CD4-positive, alpha-beta memory T cell (primary cell): ENCODE measurements at regions of chr5 and their contacts with region 1.

Region 1: GRCh38 chr5:149567226-149567625 is 14.1 kb upstream of the ARHGEF37 start:
- DNase-seq: no peak
- H3K4me3 ChIP-seq: no peak overlapping the region
- H3K4me3 Mint-ChIP-seq: no peak overlapping the region
- H3K27ac ChIP-seq: no peak overlapping the region
- H3K27ac Mint-ChIP-seq: no peak overlapping the region
- H3K4me1 ChIP-seq: no peaks in the 10 kb centered on the region
- H3K4me1 Mint-ChIP-seq: peaks cover 0 to 9% (median 6%) of the 10 kb centered on the region in 4 donors
- H3K27me3 ChIP-seq: no peaks in the 10 kb centered on the region
- H3K27me3 Mint-ChIP-seq: no peaks in the 10 kb centered on the region

Region 2: GRCh38 chr5:149381987-149382340 is 185.3 kb before region 1 on chr5:
- CTCF ChIA-PET with region 1: interaction called, 84 read pairs
- POLR2A ChIA-PET with region 1: interaction called, 3 read pairs
- intact Hi-C with region 1: loop called (anchors 1 kb)
- DNase-seq: peak; percentile 50 to 56 (median 54)
- H3K4me3 ChIP-seq: no peak overlapping the region
- H3K4me3 Mint-ChIP-seq: no peak overlapping the region
- H3K27ac ChIP-seq: no peak overlapping the region
- H3K27ac Mint-ChIP-seq: peak overlapping the region in 3 of 7 donors; percentile 43 to 58 (median 53)
- H3K4me1 ChIP-seq: no peaks in the 10 kb centered on the region
- H3K4me1 Mint-ChIP-seq: peaks cover 0 to 4% (median 1%) of the 10 kb centered on the region in 4 donors
- H3K27me3 ChIP-seq: no peaks in the 10 kb centered on the region
- H3K27me3 Mint-ChIP-seq: peaks cover 3 to 4% of the 10 kb centered on the region in 2 donors

Region 3: DNA sequence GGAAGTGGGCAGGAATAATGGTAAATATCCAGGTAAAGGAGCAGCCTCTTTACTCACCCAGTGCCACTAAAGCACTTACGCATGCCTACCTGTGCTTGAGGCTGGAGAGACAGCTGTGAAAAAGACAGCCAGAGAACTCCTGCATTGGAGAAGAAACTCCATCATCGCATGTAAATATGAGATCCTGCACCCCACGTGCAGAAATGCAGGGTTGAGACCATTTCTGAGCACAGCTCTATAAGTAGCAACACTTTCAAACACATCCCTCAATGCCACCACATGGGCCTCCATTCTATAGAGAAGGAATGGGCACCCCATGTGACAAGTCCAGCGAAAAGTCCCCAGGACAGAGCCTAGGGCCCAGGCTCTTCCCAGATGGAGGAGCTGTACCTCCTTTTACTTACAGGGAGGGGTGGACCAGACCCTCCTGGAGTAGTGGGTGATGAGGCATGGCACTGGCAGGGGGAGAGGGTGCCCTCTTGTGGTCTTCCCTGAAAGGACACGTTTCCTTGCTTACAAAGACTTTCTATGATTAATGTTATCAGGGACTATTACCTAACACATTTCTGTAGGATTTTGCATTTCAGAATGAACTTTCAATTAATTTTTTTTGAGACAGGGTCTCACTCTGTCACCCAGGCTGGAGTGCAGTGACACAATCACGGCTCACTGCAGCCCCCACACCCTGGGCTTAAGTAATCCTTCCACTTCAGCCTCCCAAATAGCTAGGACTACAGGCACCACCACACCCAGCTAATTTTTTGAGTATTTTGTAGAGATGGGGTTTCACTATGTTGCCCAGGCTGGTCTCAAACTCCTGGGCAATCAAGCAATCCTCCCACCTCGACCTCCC is 132.8 kb before region 1 on chr5:
- CTCF ChIA-PET with region 1: interaction called, 68 read pairs
- POLR2A ChIA-PET with region 1: no interaction called
- intact Hi-C with region 1: loop called (anchors 2 kb)
- DNase-seq: peak in 4 of 5 donors; percentile 34 to 42 (median 38)
- H3K4me3 ChIP-seq: no peak overlapping the region
- H3K4me3 Mint-ChIP-seq: no peak overlapping the region
- H3K27ac ChIP-seq: no peak overlapping the region
- H3K27ac Mint-ChIP-seq: no peak overlapping the region
- H3K4me1 ChIP-seq: peaks cover 3% of the 10 kb centered on the region
- H3K4me1 Mint-ChIP-seq: peaks cover 0 to 11% (median 6%) of the 10 kb centered on the region in 4 donors
- H3K27me3 ChIP-seq: no peaks in the 10 kb centered on the region
- H3K27me3 Mint-ChIP-seq: no peaks in the 10 kb centered on the region

Region 4: GRCh38 chr5:149442563-149443182 is 124.6 kb before region 1 on chr5:
- CTCF ChIA-PET with region 1: interaction called, 68 read pairs
- POLR2A ChIA-PET with region 1: no interaction called
- intact Hi-C with region 1: loop called (anchors 1 kb)
- DNase-seq: peak; percentile 45 to 53 (median 48)
- H3K4me3 ChIP-seq: no peak overlapping the region
- H3K4me3 Mint-ChIP-seq: no peak overlapping the region
- H3K27ac ChIP-seq: no peak overlapping the region
- H3K27ac Mint-ChIP-seq: peak overlapping the region in 1 of 7 donors; percentile 73
- H3K4me1 ChIP-seq: peaks cover 10% of the 10 kb centered on the region
- H3K4me1 Mint-ChIP-seq: peaks cover 8 to 14% (median 11%) of the 10 kb centered on the region in 4 donors
- H3K27me3 ChIP-seq: no peaks in the 10 kb centered on the region
- H3K27me3 Mint-ChIP-seq: no peaks in the 10 kb centered on the region

Region 5: DNA sequence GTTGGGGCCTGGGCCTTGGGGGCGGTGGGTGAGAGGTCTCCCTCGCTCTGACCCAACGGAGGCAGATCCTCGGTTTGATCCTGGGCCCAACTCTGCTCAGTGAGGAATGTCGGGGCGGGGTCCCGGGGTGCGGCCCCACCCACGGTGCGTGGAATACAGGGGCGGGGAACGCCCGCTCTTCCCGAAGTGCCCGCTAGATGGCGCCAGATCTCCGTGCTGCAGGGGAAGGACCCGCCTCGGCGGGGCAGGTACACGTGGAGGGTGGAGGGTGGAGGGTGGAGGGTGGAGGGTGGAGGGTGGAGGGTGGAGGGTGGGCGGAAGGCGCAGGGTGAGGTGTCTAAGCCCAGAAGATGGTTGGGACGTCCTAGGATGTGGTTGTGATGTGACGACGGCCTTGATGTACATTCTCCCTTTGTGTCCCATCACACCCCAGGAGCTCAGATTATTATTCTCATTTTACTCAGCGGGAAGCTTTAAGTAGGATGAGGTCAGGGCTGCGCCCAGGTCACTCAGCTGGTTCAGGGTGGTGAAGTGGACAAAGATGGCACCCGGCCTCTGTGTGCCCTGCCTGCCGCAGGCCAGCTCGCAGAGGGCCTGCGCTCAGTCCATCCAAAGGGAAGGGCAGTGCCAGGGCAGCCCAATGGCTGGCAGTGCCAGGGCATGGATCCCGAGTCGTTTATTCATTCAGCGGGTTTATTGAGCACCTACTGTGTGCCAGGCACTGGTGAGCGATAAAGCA is 891.8 kb after region 1 on chr5:
- CTCF ChIA-PET with region 1: no interaction called
- POLR2A ChIA-PET with region 1: no interaction called
- intact Hi-C with region 1: no loop called
- DNase-seq: peak; percentile 82 to 86 (median 82)
- H3K4me3 ChIP-seq: no peak overlapping the region
- H3K4me3 Mint-ChIP-seq: peak overlapping the region in 5 of 8 donors; percentile 29 to 72 (median 49)
- H3K27ac ChIP-seq: no peak overlapping the region
- H3K27ac Mint-ChIP-seq: peak overlapping the region; percentile 52 to 88 (median 70)
- H3K4me1 ChIP-seq: peaks cover 19% of the 10 kb centered on the region
- H3K4me1 Mint-ChIP-seq: peaks cover 12 to 29% (median 21%) of the 10 kb centered on the region in 4 donors
- H3K27me3 ChIP-seq: no peaks in the 10 kb centered on the region
- H3K27me3 Mint-ChIP-seq: no peaks in the 10 kb centered on the region